Activated T-helper 1 cell treated with anti-CD3 and anti-CD28 coated beads, Interleukin-12 subunit alpha, Interleukin-12 subunit beta, Interleukin-2, Interleukin-4 antibody, amounts not matched to agents 30 ng/mL and 10 ng/mL and 1 ng/mL, durations not matched to agents 14 hours and 24 hours and 36 hours (primary cell): ENCODE measurements at regions of chr4 and their contacts with region 1.

Region 1: DNA sequence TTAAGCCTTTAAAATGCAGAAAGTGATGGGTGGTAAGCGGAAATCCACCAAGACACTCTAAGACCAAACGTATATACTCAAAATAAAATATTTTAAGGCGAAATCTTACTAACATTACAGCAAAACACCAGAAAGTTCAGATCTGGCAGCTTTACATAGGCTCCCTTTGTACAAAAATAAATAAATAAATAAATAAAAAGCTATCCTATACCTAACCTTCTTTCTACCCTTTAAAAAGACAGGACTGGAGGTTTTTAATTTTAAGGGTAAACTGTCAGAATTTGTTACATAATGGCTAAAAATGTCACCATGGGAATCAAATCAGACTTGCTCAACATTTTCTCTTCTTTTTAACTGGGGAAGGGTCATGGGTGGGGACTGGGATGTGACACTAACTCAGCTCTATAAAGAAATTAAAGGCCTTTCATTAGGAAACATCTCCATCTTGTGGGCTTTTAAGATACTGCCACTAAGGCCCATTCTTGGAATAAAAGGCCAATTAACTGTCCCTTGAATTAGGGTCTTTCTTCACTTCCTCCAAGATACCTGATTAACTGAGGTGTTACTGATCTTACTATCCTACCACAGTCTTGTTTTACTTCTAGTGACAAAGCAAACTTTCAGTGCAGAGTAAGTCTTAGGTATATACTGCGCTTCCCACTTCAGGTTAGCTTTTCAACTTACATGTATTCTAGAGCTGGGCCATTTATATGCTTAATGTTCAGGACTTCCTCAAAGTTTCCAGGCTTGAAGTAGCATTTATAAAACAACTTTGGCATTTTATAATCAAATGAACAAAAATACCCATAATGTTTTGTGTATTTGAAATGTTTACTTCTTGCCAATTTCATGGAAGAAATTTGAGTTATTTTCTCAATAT is 13.3 kb downstream of the HNRNPD start:
- DNase-seq: no peak
- H3K4me3 Mint-ChIP-seq: no peak overlapping the region
- H3K27ac Mint-ChIP-seq: peak overlapping the region; percentile 57
- H3K4me1 Mint-ChIP-seq: peaks cover 83% of the 10 kb centered on the region
- H3K27me3 Mint-ChIP-seq: no peaks in the 10 kb centered on the region

Region 2: GRCh38 chr4:82284858-82285805 is 75.4 kb before region 1 on chr4:
- intact Hi-C with region 1: loop called (anchors 2 kb)
- DNase-seq: peak; percentile 99
- H3K4me3 Mint-ChIP-seq: peak overlapping the region; percentile 80
- H3K27ac Mint-ChIP-seq: peak overlapping the region; percentile 27
- H3K4me1 Mint-ChIP-seq: peaks cover 14% of the 10 kb centered on the region
- H3K27me3 Mint-ChIP-seq: peaks cover 24% of the 10 kb centered on the region